Heart right ventricle (tissue), 16 donors: ENCODE measurements at regions of chr12 and their contacts with region 1.

Region 1: GRCh38 chr12:130871286-130872178 is at the start of gene RAN:
- DNase-seq: peak; percentile 90 to 94
- ATAC-seq: peak; percentile 88 to 95 (median 92)
- H3K4me3 ChIP-seq: peak within 1 kb of the TSS; percentile 66 to 89 (median 78)
- H3K27ac ChIP-seq: peak within 1 kb of the TSS; percentile 35 to 93 (median 87)
- H3K4me1 ChIP-seq: peaks cover 0 to 42% (median 27%) of the 10 kb centered on the region in 9 donors
- H3K27me3 ChIP-seq: no peaks in the 10 kb centered on the region
- CTCF ChIP-seq: no peak
- total RNA-seq, gene RAN: 224 to 404 (median 291) TPM

Region 2: DNA sequence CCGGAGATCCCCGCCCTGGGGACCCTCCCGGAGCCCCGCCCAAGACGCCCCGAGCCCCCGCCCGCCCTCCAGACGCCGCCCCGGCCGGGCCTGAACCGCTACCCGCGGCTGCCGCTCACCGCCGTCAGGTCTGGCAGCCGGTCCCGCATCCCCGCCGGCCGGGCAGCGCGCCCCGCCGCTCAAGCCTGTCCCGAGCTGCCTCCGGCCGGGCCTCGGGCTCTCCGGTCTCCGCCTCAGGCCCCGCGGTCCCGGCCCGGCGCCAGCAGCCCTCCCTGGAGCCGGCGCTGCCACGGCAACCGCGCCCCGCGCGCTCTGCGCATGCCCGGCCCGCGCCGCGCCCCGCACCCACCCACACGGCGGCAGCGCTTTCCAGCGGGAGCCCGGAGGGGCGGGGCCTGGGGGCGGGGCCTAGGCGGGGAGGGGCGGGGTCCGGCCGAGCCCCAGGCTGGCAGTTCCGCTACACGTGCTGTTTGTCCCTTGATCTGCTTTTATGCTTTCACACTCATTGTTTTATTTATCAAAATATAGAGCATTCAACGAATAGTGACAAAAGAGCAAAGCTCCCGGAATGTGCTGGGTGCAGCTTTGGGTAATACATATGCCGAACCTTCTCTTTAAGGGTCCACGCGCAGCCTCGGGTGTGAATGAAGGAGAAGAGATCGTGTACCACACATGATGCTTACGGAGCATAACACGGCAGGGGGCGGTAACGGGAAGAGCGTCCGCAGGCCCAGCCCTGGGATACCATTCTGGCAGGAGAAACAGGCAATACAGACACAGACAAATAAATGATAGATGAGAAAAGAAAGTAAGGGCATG is 32.4 kb before region 1 on chr12 and contains the start of gene STX2:
- intact Hi-C with region 1: loop called in 3 of 10 experiments (anchors 1 to 5 kb)
- DNase-seq: peak; percentile 82 to 93
- ATAC-seq: peak; percentile 95 to 99 (median 97)
- H3K4me3 ChIP-seq: peak within 1 kb of the TSS; percentile 61 to 96 (median 84)
- H3K27ac ChIP-seq: peak within 1 kb of the TSS; percentile 43 to 79 (median 66)
- H3K4me1 ChIP-seq: peaks cover 9 to 28% (median 17%) of the 10 kb centered on the region in 9 donors
- H3K27me3 ChIP-seq: no peaks in the 10 kb centered on the region
- CTCF ChIP-seq: peak in 6 of 9 donors; percentile 16 to 53 (median 33)
- total RNA-seq, gene STX2: 6.0 to 17.0 (median 11.9) TPM